Naive thymus-derived CD4-positive, alpha-beta T cell (primary cell): ENCODE measurements at regions of chr1 and their contacts with region 1.

Region 1: GRCh38 chr1:186304982-186305949 is 69.8 kb downstream of the TPR start:
- DNase-seq: peak in 6 of 9 donors; percentile 34 to 51 (median 42)
- ATAC-seq: peak; percentile 39
- H3K4me3 ChIP-seq: no peak overlapping the region
- H3K4me3 Mint-ChIP-seq: peak overlapping the region in 9 of 10 donors; percentile 2 to 76 (median 45)
- H3K27ac ChIP-seq: peak overlapping the region; percentile 58
- H3K27ac Mint-ChIP-seq: peak overlapping the region; percentile 82 to 95 (median 91)
- H3K4me1 ChIP-seq: peaks cover 3 to 83% of the 10 kb centered on the region in 2 donors
- H3K4me1 Mint-ChIP-seq: peaks cover 35 to 66% (median 56%) of the 10 kb centered on the region in 7 donors
- H3K27me3 ChIP-seq: no peaks in the 10 kb centered on the region
- H3K27me3 Mint-ChIP-seq: no peaks in the 10 kb centered on the region

Region 2: GRCh38 chr1:185694081-185694480 is 611.2 kb before region 1 on chr1:
- CTCF ChIA-PET with region 1: no interaction called
- POLR2A ChIA-PET with region 1: no interaction called
- intact Hi-C with region 1: loop called in 1 of 2 experiments (anchors 10 kb)
- DNase-seq: peak in 4 of 9 donors; percentile 20 to 26 (median 22)
- ATAC-seq: peak; percentile 60
- H3K4me3 ChIP-seq: peak overlapping the region; percentile 31
- H3K4me3 Mint-ChIP-seq: peak overlapping the region; percentile 73 to 85 (median 78)
- H3K27ac ChIP-seq: peak overlapping the region; percentile 50
- H3K27ac Mint-ChIP-seq: peak overlapping the region; percentile 77 to 96 (median 88)
- H3K4me1 ChIP-seq: peaks cover 0 to 17% of the 10 kb centered on the region in 2 donors
- H3K4me1 Mint-ChIP-seq: peaks cover 11 to 27% (median 14%) of the 10 kb centered on the region in 7 donors
- H3K27me3 ChIP-seq: no peaks in the 10 kb centered on the region
- H3K27me3 Mint-ChIP-seq: peaks cover 0 to 27% (median 9%) of the 10 kb centered on the region in 5 donors

Region 3: GRCh38 chr1:186272486-186272885 is 32.8 kb before region 1 on chr1:
- CTCF ChIA-PET with region 1: interaction called, 24 read pairs
- POLR2A ChIA-PET with region 1: no interaction called
- intact Hi-C with region 1: loop called (anchors 1 kb)
- DNase-seq: peak in 5 of 9 donors; percentile 36 to 55 (median 46)
- ATAC-seq: peak; percentile 50
- H3K4me3 ChIP-seq: no peak overlapping the region
- H3K4me3 Mint-ChIP-seq: no peak overlapping the region
- H3K27ac ChIP-seq: no peak overlapping the region
- H3K27ac Mint-ChIP-seq: peak overlapping the region in 2 of 9 donors; percentile 45 to 74
- H3K4me1 ChIP-seq: no peaks in the 10 kb centered on the region
- H3K4me1 Mint-ChIP-seq: peaks cover 6 to 24% (median 20%) of the 10 kb centered on the region in 7 donors
- H3K27me3 ChIP-seq: no peaks in the 10 kb centered on the region
- H3K27me3 Mint-ChIP-seq: peaks cover 0 to 11% (median 0%) of the 10 kb centered on the region in 5 donors

Region 4: DNA sequence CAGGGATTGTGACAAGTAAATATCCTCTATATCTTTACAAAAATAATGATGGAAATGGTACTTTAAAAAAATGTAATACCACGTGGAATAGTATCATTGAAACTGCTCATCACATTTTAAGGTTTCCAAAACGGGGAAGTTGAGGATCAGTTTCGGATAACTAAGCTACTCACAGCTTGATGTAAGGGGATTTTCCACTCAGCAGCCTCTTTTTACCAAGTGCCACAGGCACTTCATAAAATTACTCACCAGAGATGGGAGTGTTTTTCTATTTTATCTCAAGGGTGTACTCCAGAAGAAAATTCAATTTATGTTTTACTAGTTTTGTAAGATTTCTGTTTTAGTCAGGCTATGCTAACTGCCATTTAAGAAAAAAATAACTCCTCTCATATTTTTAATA is 21.9 kb before region 1 on chr1:
- CTCF ChIA-PET with region 1: interaction called, 4 read pairs
- POLR2A ChIA-PET with region 1: interaction called, 9 read pairs
- intact Hi-C with region 1: loop called (anchors 1 kb)
- DNase-seq: no peak
- ATAC-seq: no peak
- H3K4me3 ChIP-seq: no peak overlapping the region
- H3K4me3 Mint-ChIP-seq: peak overlapping the region in 3 of 10 donors; percentile 29 to 57 (median 35)
- H3K27ac ChIP-seq: no peak overlapping the region
- H3K27ac Mint-ChIP-seq: peak overlapping the region in 4 of 9 donors; percentile 8 to 89 (median 87)
- H3K4me1 ChIP-seq: peaks cover 0 to 12% of the 10 kb centered on the region in 2 donors
- H3K4me1 Mint-ChIP-seq: peaks cover 19 to 48% (median 39%) of the 10 kb centered on the region in 7 donors
- H3K27me3 ChIP-seq: no peaks in the 10 kb centered on the region
- H3K27me3 Mint-ChIP-seq: peaks cover 0 to 3% (median 0%) of the 10 kb centered on the region in 5 donors

Region 5: GRCh38 chr1:186289943-186290545 is 15.2 kb before region 1 on chr1:
- CTCF ChIA-PET with region 1: interaction called, 50 read pairs
- POLR2A ChIA-PET with region 1: interaction called, 32 read pairs
- intact Hi-C with region 1: loop called (anchors 1 kb)
- DNase-seq: no peak
- ATAC-seq: no peak
- H3K4me3 ChIP-seq: no peak overlapping the region
- H3K4me3 Mint-ChIP-seq: peak overlapping the region in 8 of 10 donors; percentile 8 to 72 (median 51)
- H3K27ac ChIP-seq: peak overlapping the region; percentile 52
- H3K27ac Mint-ChIP-seq: peak overlapping the region; percentile 92 to 100 (median 94)
- H3K4me1 ChIP-seq: peaks cover 0 to 41% of the 10 kb centered on the region in 2 donors
- H3K4me1 Mint-ChIP-seq: peaks cover 33 to 82% (median 71%) of the 10 kb centered on the region in 7 donors
- H3K27me3 ChIP-seq: no peaks in the 10 kb centered on the region
- H3K27me3 Mint-ChIP-seq: peaks cover 0 to 3% (median 0%) of the 10 kb centered on the region in 5 donors

Region 6: GRCh38 chr1:186315570-186315969 is 10.3 kb after region 1 on chr1:
- CTCF ChIA-PET with region 1: interaction called, 8 read pairs
- POLR2A ChIA-PET with region 1: interaction called, 10 read pairs
- intact Hi-C with region 1: no loop called
- DNase-seq: no peak
- ATAC-seq: no peak
- H3K4me3 ChIP-seq: no peak overlapping the region
- H3K4me3 Mint-ChIP-seq: peak overlapping the region in 1 of 10 donors; percentile 15
- H3K27ac ChIP-seq: no peak overlapping the region
- H3K27ac Mint-ChIP-seq: peak overlapping the region in 8 of 9 donors; percentile 5 to 68 (median 50)
- H3K4me1 ChIP-seq: no peaks in the 10 kb centered on the region
- H3K4me1 Mint-ChIP-seq: peaks cover 1 to 33% (median 20%) of the 10 kb centered on the region in 7 donors
- H3K27me3 ChIP-seq: no peaks in the 10 kb centered on the region
- H3K27me3 Mint-ChIP-seq: no peaks in the 10 kb centered on the region